ENCODE measurements at regions of chr1 and their contacts with region 1.

Region 1: GRCh38 chr1:19390901-19391595 is 78.9 kb downstream of the SLC66A1 start:
- DNase-seq: peak; percentile 70
- ATAC-seq: peak; percentile 82
- H3K4me3 ChIP-seq: peak overlapping the region; percentile 63; the same call in 1 of the 2 replicates
- H3K27ac ChIP-seq: peak overlapping the region; percentile 81
- H3K4me1 ChIP-seq: peaks cover 41% of the 10 kb centered on the region
- H3K27me3 ChIP-seq: no peaks in the 10 kb centered on the region
- CTCF ChIP-seq: peak; percentile 81 to 92 (median 84)
- EP300 ChIP-seq: no peak; a peak in 1 of 4 replicates
- POLR2A ChIP-seq: no peak
- RAD21 ChIP-seq: peak; percentile 69

Region 2: GRCh38 chr1:19220991-19221390 is 170.1 kb before region 1 on chr1:
- CTCF ChIA-PET with region 1: no interaction called
- POLR2A ChIA-PET with region 1: no interaction called
- RAD21 ChIA-PET with region 1: no interaction called
- SMC1A ChIA-PET with region 1: no interaction called
- in situ Hi-C with region 1: no loop called
- intact Hi-C with region 1: no loop called
- DNase-seq: no peak
- ATAC-seq: no peak
- H3K4me3 ChIP-seq: no peak overlapping the region
- H3K27ac ChIP-seq: no peak overlapping the region
- H3K4me1 ChIP-seq: no peaks in the 10 kb centered on the region
- H3K27me3 ChIP-seq: no peaks in the 10 kb centered on the region
- CTCF ChIP-seq: no peak
- EP300 ChIP-seq: no peak
- POLR2A ChIP-seq: no peak
- RAD21 ChIP-seq: no peak

Region 3: GRCh38 chr1:19325958-19326748 is 64.9 kb before region 1 on chr1:
- CTCF ChIA-PET with region 1: no interaction called
- POLR2A ChIA-PET with region 1: no interaction called
- RAD21 ChIA-PET with region 1: no interaction called
- SMC1A ChIA-PET with region 1: no interaction called
- in situ Hi-C with region 1: no loop called
- intact Hi-C with region 1: no loop called
- DNase-seq: no peak
- ATAC-seq: peak; percentile 17; the same call in 1 of the 3 replicates
- H3K4me3 ChIP-seq: no peak overlapping the region
- H3K27ac ChIP-seq: no peak overlapping the region
- H3K4me1 ChIP-seq: no peaks in the 10 kb centered on the region
- H3K27me3 ChIP-seq: no peaks in the 10 kb centered on the region
- CTCF ChIP-seq: no peak
- EP300 ChIP-seq: no peak
- POLR2A ChIP-seq: peak; percentile 60
- RAD21 ChIP-seq: no peak

Region 4: GRCh38 chr1:19414515-19415121 is 23.6 kb after region 1 on chr1:
- CTCF ChIA-PET with region 1: interaction called, 15 read pairs
- POLR2A ChIA-PET with region 1: no interaction called
- RAD21 ChIA-PET with region 1: interaction called, 4 read pairs
- SMC1A ChIA-PET with region 1: interaction called, 3 read pairs
- in situ Hi-C with region 1: no loop called
- intact Hi-C with region 1: no loop called
- DNase-seq: no peak
- ATAC-seq: no peak
- H3K4me3 ChIP-seq: no peak overlapping the region
- H3K27ac ChIP-seq: no peak overlapping the region
- H3K4me1 ChIP-seq: peaks cover 16% of the 10 kb centered on the region
- H3K27me3 ChIP-seq: no peaks in the 10 kb centered on the region
- CTCF ChIP-seq: no peak
- EP300 ChIP-seq: no peak
- POLR2A ChIP-seq: no peak
- RAD21 ChIP-seq: no peak

Region 5: DNA sequence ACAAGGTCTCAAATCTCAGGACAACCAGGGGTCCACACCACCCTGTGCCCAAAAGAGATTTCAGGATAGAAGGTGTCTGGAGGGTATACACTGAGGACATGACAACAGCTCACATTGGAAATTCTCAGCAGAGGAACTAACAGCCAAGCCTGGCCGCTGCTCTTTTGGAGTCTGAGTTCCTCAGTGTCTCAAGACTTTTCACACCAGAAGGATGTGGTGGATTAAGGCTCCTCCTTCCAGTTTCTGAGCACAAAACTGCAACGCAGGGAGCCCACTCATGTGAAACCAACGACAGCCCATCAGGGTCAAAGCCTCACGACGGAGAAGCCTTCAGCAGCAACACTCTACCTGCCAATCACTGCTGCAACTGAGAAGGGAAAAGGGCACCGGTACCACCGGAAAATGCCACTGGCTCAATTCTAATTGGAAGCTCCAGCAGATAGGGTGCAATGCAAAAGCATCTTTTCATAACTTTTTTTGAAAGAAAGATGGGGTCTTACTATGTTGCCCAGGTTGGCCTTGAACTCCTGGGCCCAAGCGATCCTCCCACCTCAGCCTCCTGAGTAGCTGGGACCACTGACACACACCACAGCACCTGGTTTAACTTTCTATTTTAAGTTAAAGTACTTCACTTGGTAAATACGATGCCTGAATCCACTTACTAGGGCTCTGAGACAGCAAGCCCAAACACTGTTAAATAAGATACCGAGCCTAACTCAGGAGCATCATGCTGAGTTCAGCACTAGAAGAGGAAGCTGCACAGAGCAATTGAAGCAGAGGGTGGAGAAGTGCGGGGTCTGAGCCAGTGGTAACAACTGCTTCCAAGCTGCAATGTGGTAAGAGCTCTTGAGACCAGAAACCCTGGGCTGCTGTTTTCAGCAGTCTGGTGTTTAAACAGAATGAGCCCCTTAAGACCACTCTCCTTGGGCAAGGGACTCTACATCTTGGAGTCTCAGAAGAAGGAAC is 86.5 kb after region 1 on chr1:
- CTCF ChIA-PET with region 1: interaction called, 7 read pairs
- POLR2A ChIA-PET with region 1: interaction called, 3 read pairs
- RAD21 ChIA-PET with region 1: interaction called, 11 read pairs
- SMC1A ChIA-PET with region 1: interaction called, 7 read pairs
- in situ Hi-C with region 1: no loop called
- intact Hi-C with region 1: no loop called
- DNase-seq: peak; percentile 74
- ATAC-seq: peak; percentile 84
- H3K4me3 ChIP-seq: peak overlapping the region; percentile 58
- H3K27ac ChIP-seq: peak overlapping the region; percentile 94
- H3K4me1 ChIP-seq: peaks cover 48% of the 10 kb centered on the region
- H3K27me3 ChIP-seq: no peaks in the 10 kb centered on the region
- CTCF ChIP-seq: no peak
- EP300 ChIP-seq: no peak; a peak in 1 of 4 replicates
- POLR2A ChIP-seq: peak; percentile 62
- RAD21 ChIP-seq: no peak

Region 6: DNA sequence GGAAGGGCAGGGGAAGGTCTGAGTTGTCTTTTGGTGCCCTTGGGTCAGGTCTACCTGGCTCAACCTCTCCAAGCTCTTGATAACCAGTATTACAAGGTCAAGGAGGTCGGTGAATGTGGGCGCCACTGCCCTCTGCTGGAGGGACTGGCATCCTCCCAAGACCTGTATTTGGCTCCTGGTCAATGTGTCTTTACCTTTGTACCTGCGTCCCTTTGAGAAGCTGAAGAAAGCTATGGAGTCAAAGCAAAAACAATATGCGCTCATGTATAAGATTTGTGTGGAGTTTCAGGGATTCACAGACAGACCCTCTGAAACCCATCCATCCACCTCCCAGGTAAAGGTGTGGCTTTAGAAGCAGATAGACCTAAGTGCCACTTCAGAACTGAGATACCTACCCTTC is 191.3 kb after region 1 on chr1:
- CTCF ChIA-PET with region 1: interaction called, 77 read pairs
- POLR2A ChIA-PET with region 1: no interaction called
- RAD21 ChIA-PET with region 1: interaction called, 15 read pairs
- SMC1A ChIA-PET with region 1: interaction called, 24 read pairs
- in situ Hi-C with region 1: loop called (anchors 5 kb)
- intact Hi-C with region 1: loop called (anchors 1 kb)
- DNase-seq: peak; percentile 42
- ATAC-seq: peak; percentile 100
- H3K4me3 ChIP-seq: no peak overlapping the region
- H3K27ac ChIP-seq: no peak overlapping the region
- H3K4me1 ChIP-seq: no peaks in the 10 kb centered on the region
- H3K27me3 ChIP-seq: no peaks in the 10 kb centered on the region
- CTCF ChIP-seq: peak; percentile 86 to 89 (median 87)
- EP300 ChIP-seq: no peak
- POLR2A ChIP-seq: no peak
- RAD21 ChIP-seq: peak; percentile 90

Region 7: GRCh38 chr1:19644681-19645410 is 253.8 kb after region 1 on chr1:
- CTCF ChIA-PET with region 1: interaction called, 4 read pairs
- POLR2A ChIA-PET with region 1: no interaction called
- RAD21 ChIA-PET with region 1: no interaction called
- SMC1A ChIA-PET with region 1: interaction called, 4 read pairs
- in situ Hi-C with region 1: loop called (anchors 5 kb)
- intact Hi-C with region 1: loop called (anchors 2 kb)
- DNase-seq: no peak
- ATAC-seq: peak; percentile 45
- H3K4me3 ChIP-seq: peak overlapping the region; percentile 68
- H3K27ac ChIP-seq: no peak overlapping the region
- H3K4me1 ChIP-seq: peaks cover 3% of the 10 kb centered on the region; the same call in 1 of the 2 replicates
- H3K27me3 ChIP-seq: peaks cover 2 to 6% of the 10 kb centered on the region in 2 experiments
- CTCF ChIP-seq: no peak
- EP300 ChIP-seq: no peak
- POLR2A ChIP-seq: no peak
- RAD21 ChIP-seq: no peak